Naive thymus-derived CD4-positive, alpha-beta T cell (primary cell): ENCODE measurements at regions of chr15 and their contacts with region 1.

Region 1: DNA sequence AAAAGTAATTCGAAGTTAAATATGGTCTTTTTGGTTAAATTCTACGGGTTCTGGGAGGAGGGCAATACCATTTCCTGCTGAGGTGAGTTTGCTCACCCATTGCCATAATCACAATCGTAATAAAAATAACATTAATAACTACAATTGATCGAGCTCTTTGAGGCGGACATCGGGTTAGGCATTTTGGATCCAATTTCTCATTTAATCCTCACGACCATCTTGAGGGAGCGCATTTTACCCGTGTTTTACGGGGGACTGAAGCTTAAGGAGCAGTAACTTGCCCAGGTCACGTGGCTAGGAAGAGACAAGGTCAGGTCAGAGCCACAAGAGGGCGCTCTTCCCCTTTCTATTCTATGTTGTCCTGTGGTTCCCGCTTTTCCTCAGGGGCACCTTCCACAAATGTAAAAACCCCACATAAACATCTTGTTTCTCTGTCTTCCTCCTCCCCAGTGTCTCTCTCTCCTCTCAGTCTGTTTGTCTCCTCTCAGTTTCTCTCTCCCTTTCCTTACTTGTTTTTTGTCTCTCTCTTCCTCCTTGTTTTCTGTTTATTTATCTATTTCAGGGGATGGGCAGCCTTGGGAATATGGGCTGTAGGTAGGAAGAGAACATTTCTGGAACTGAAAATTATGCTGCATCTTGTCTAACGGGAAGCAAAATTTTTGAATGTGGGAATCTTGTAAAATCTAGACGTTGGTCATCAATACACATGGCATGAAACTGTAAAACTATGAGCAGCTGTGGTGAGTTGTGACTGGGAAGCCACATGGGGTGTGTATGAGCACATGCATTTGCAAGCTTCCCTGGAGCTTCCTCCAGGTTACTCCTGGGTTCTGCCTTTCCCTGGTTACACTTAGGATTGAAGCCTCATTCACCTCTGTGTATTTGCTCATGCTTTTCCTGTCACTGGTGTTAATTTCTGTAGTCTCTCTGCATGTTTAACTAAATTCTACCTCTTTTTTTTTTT is 71.0 kb downstream of the SQOR start:
- DNase-seq: peak; percentile 30 to 78 (median 60)
- ATAC-seq: peak; percentile 90
- H3K4me3 ChIP-seq: peak overlapping the region; percentile 74
- H3K4me3 Mint-ChIP-seq: peak overlapping the region; percentile 88 to 97 (median 94)
- H3K27ac ChIP-seq: peak overlapping the region; percentile 22
- H3K27ac Mint-ChIP-seq: peak overlapping the region in 8 of 9 donors; percentile 63 to 94 (median 78)
- H3K4me1 ChIP-seq: no peaks in the 10 kb centered on the region
- H3K4me1 Mint-ChIP-seq: peaks cover 5 to 19% (median 11%) of the 10 kb centered on the region in 7 donors
- H3K27me3 ChIP-seq: no peaks in the 10 kb centered on the region
- H3K27me3 Mint-ChIP-seq: peaks cover 0 to 31% (median 3%) of the 10 kb centered on the region in 5 donors

Region 2: DNA sequence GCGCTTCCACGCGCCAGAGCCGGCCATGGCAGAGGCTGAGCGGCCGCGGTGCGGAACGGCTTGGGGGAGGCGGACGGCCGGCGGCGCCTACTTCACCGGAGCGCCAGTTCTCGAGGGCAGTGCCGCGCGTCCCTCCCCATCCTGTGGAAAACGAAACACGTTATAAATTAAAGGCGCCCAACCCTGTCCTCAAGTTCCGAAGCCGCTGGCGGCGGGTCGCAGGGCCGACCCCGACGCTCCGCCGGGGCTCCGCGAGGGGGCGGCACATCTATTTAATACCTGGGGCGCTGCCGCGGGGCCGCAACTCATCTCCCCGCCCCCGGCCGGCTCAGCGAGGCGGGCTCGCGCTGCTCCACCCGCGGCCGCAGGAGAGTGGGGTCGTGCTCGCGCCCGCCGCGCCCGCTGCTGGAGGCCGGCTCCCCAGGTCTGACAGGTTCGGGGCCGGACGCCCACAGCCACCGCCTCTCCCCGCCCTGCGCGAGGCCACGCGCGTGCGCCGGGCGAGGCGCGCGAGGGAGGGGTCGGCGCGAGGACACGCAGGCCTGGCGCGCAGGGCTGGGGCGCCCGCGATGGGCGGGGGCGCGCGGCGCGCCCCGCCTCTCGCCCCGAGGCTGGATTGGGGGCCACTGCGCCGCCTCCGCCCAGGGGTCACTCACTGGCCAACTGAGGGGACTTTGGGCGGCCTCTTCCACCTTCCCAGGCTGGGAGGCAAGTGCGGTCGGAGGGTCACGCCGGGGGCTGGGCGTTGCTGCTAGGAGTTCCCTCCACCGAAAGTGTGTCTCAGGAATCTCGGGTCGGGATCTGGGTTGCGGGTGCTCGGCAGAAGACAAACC is 183.2 kb before region 1 on chr15 and contains the start of gene SLC30A4:
- CTCF ChIA-PET with region 1: no interaction called
- POLR2A ChIA-PET with region 1: no interaction called
- intact Hi-C with region 1: loop called (anchors 10 kb)
- DNase-seq: peak; percentile 49 to 75 (median 66)
- ATAC-seq: peak; percentile 92
- H3K4me3 ChIP-seq: peak within 1 kb of the TSS; percentile 66
- H3K4me3 Mint-ChIP-seq: peak within 1 kb of the TSS; percentile 93 to 98 (median 94)
- H3K27ac ChIP-seq: peak within 1 kb of the TSS; percentile 64
- H3K27ac Mint-ChIP-seq: peak within 1 kb of the TSS; percentile 79 to 90 (median 85)
- H3K4me1 ChIP-seq: peaks cover 0 to 8% of the 10 kb centered on the region in 2 donors
- H3K4me1 Mint-ChIP-seq: peaks cover 23 to 43% (median 33%) of the 10 kb centered on the region in 7 donors
- H3K27me3 ChIP-seq: no peaks in the 10 kb centered on the region
- H3K27me3 Mint-ChIP-seq: peaks cover 0 to 40% (median 0%) of the 10 kb centered on the region in 5 donors
- total RNA-seq, gene SLC30A4: 2.6 to 4.4 (median 3.0) TPM

Region 3: DNA sequence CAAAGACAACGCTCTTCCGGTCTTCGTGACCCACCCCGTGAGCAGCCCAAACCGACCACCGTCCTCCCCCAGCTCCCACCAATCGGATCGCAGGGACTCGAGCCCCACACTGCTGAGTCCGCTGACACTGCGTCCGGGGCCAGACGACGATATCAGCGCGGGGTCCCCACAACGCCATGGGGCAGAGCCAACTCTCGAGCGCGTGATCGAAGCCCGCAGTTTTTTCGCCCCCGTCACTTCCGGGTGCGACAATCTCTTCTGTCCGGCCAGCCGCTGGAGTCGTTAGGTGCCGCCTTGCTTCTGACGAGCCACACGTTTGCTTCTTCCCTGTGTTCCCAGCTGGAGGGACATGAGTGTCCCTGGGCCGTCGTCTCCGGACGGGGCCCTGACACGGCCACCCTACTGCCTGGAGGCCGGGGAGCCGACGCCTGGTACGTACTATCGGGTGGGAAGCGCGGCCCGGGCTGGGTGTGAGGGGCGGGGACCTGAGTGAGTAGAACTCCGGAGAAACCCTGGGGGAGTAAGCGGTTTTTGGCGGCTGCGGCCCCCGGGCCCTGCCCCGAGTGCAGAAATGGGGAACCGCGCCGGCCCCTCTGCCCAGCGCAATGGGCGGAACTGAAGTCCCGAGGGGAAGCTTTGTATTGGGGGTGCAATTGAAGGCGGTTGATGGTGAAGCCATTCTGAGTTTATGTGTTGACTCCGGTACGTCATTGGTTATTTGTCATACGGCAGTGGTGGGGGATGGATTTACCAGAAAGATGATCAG is 118.5 kb before region 1 on chr15 and contains the start of gene BLOC1S6:
- CTCF ChIA-PET with region 1: no interaction called
- POLR2A ChIA-PET with region 1: interaction called, 4 read pairs
- intact Hi-C with region 1: loop called in 1 of 2 experiments (anchors 5 kb)
- DNase-seq: peak; percentile 81 to 91 (median 87)
- ATAC-seq: peak; percentile 87
- H3K4me3 ChIP-seq: peak within 1 kb of the TSS; percentile 87
- H3K4me3 Mint-ChIP-seq: peak within 1 kb of the TSS; percentile 96 to 100 (median 98)
- H3K27ac ChIP-seq: peak within 1 kb of the TSS; percentile 97
- H3K27ac Mint-ChIP-seq: peak within 1 kb of the TSS; percentile 100
- H3K4me1 ChIP-seq: peaks cover 25 to 26% of the 10 kb centered on the region in 2 donors
- H3K4me1 Mint-ChIP-seq: peaks cover 27 to 55% (median 38%) of the 10 kb centered on the region in 7 donors
- H3K27me3 ChIP-seq: no peaks in the 10 kb centered on the region
- H3K27me3 Mint-ChIP-seq: no peaks in the 10 kb centered on the region
- total RNA-seq, gene BLOC1S6: 34.4 to 63.9 (median 50.9) TPM

Region 4: GRCh38 chr15:45634442-45635190 is 71.2 kb before region 1 on chr15 and contains the start of gene SQOR:
- CTCF ChIA-PET with region 1: no interaction called
- POLR2A ChIA-PET with region 1: interaction called, 3 read pairs
- intact Hi-C with region 1: loop called (anchors 1 to 2 kb)
- DNase-seq: peak; percentile 46 to 78 (median 58)
- ATAC-seq: peak; percentile 72
- H3K4me3 ChIP-seq: peak within 1 kb of the TSS; percentile 84
- H3K4me3 Mint-ChIP-seq: peak within 1 kb of the TSS; percentile 91 to 98 (median 96)
- H3K27ac ChIP-seq: peak within 1 kb of the TSS; percentile 69
- H3K27ac Mint-ChIP-seq: peak within 1 kb of the TSS; percentile 84 to 96 (median 91)
- H3K4me1 ChIP-seq: peaks cover 24 to 27% of the 10 kb centered on the region in 2 donors
- H3K4me1 Mint-ChIP-seq: peaks cover 24 to 46% (median 42%) of the 10 kb centered on the region in 7 donors
- H3K27me3 ChIP-seq: no peaks in the 10 kb centered on the region
- H3K27me3 Mint-ChIP-seq: peaks cover 0 to 13% (median 0%) of the 10 kb centered on the region in 5 donors
- total RNA-seq, gene SQOR: 20.6 to 115 (median 32.6) TPM

Region 5: DNA sequence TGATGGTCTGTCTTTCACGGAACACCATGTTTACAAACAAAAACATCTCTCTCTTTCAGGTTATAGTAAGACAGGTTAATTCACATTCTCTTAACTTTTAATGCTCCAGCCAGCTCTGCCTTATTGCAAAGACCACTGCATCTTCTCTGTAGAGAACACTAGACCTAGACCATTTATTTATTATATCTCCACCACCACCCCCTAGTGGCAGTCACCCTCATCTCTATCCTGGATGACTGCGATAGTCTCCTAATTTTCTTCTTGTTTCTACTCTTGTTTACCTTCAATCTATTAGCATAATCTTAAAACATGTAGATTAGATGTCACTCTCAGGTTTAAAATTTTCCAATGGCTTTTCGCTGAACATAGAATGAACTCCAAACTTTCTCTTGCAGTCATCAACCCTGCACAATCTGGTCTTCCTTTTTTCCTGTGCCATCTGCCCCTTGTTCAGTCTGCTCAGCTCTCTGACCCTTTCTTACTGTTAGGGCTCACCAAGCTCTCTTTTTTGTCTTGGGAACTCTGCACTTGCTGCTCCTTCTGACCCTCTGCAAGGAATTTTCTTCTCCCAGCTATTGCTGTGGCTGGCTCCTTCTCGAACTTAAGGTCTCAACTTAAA is 84.6 kb after region 1 on chr15:
- CTCF ChIA-PET with region 1: interaction called, 4 read pairs
- POLR2A ChIA-PET with region 1: no interaction called
- intact Hi-C with region 1: loop called (anchors 1 to 5 kb)
- DNase-seq: peak in 1 of 9 donors; percentile 2
- ATAC-seq: no peak
- H3K4me3 ChIP-seq: no peak overlapping the region
- H3K4me3 Mint-ChIP-seq: no peak overlapping the region
- H3K27ac ChIP-seq: no peak overlapping the region
- H3K27ac Mint-ChIP-seq: no peak overlapping the region
- H3K4me1 ChIP-seq: no peaks in the 10 kb centered on the region
- H3K4me1 Mint-ChIP-seq: peaks cover 0 to 2% (median 0%) of the 10 kb centered on the region in 7 donors
- H3K27me3 ChIP-seq: no peaks in the 10 kb centered on the region
- H3K27me3 Mint-ChIP-seq: peaks cover 2 to 45% (median 31%) of the 10 kb centered on the region in 5 donors

Region 6: GRCh38 chr15:46304320-46304719 is 598.5 kb after region 1 on chr15:
- CTCF ChIA-PET with region 1: no interaction called
- POLR2A ChIA-PET with region 1: no interaction called
- intact Hi-C with region 1: loop called in 1 of 2 experiments (anchors 10 kb)
- DNase-seq: no peak
- ATAC-seq: no peak
- H3K4me3 ChIP-seq: no peak overlapping the region
- H3K4me3 Mint-ChIP-seq: no peak overlapping the region
- H3K27ac ChIP-seq: no peak overlapping the region
- H3K27ac Mint-ChIP-seq: no peak overlapping the region
- H3K4me1 ChIP-seq: no peaks in the 10 kb centered on the region
- H3K4me1 Mint-ChIP-seq: no peaks in the 10 kb centered on the region
- H3K27me3 ChIP-seq: no peaks in the 10 kb centered on the region
- H3K27me3 Mint-ChIP-seq: peaks cover 0 to 6% (median 3%) of the 10 kb centered on the region in 5 donors

Region 7: DNA sequence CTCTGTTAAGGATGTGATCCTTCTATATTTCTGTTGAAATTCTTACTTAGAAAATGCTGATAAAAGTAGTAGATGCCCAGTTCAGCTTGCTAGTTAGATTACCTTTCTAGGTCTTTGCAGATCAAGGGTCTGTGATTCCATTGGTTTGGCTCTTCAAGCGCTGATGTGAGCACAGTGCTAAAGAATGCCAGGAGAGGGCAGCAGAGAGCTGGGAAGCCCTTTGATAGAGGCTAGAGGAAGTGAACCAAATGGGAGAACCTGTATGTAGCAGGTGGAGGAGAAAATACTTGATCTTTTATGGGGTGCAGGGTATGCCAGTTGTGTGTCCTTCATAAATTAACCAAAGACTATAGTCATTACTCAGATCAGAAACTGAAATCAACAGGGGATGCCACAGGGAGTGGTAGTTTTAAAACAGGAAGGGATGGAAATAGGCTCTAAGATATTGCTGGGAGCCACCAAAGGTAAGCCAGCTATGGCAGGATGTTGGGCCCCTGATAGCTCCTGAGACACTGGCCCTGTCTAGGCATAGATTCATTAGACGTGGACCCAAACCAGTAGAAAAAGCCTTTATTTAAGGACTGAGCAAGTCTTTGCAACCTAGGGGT is 606.4 kb after region 1 on chr15:
- CTCF ChIA-PET with region 1: no interaction called
- POLR2A ChIA-PET with region 1: no interaction called
- intact Hi-C with region 1: loop called (anchors 10 kb)
- DNase-seq: peak in 7 of 9 donors; percentile 2 to 48 (median 39)
- ATAC-seq: peak; percentile 67
- H3K4me3 ChIP-seq: no peak overlapping the region
- H3K4me3 Mint-ChIP-seq: no peak overlapping the region
- H3K27ac ChIP-seq: no peak overlapping the region
- H3K27ac Mint-ChIP-seq: no peak overlapping the region
- H3K4me1 ChIP-seq: no peaks in the 10 kb centered on the region
- H3K4me1 Mint-ChIP-seq: no peaks in the 10 kb centered on the region
- H3K27me3 ChIP-seq: no peaks in the 10 kb centered on the region
- H3K27me3 Mint-ChIP-seq: peaks cover 0 to 6% (median 0%) of the 10 kb centered on the region in 5 donors